ENCODE measurements at regions of chr16 and their contacts with region 1.

Region 1: DNA sequence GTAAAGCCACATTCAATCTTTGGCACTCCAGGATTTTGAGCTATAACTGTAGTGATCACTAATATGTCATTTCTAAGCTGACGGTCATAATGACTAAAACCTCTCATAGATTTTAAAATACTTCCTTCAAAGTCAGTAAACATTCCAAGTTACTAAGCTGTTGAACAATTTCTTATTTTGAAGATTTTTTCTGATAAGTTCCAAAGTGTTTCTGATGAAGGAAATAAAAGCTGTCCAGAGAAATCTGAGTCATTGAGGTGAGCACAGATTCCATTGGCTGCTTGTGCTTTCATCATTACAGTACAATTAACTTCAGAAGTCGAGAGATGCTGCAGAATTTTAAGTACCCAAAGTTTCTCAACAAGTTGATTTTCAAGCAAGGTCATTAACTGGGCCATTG is 23.9 kb downstream of the NLRC5 start:
- DNase-seq: peak; percentile 76
- H3K4me3 ChIP-seq: no peak overlapping the region
- H3K27ac ChIP-seq: peak overlapping the region; percentile 74
- H3K4me1 ChIP-seq: peaks cover 31% of the 10 kb centered on the region
- H3K27me3 ChIP-seq: no peaks in the 10 kb centered on the region

Region 2: GRCh38 chr16:56898847-56899246 is 114.4 kb before region 1 on chr16:
- in situ Hi-C with region 1: no loop called
- DNase-seq: no peak
- H3K4me3 ChIP-seq: no peak overlapping the region
- H3K27ac ChIP-seq: no peak overlapping the region
- H3K4me1 ChIP-seq: no peaks in the 10 kb centered on the region
- H3K27me3 ChIP-seq: no peaks in the 10 kb centered on the region

Region 3: DNA sequence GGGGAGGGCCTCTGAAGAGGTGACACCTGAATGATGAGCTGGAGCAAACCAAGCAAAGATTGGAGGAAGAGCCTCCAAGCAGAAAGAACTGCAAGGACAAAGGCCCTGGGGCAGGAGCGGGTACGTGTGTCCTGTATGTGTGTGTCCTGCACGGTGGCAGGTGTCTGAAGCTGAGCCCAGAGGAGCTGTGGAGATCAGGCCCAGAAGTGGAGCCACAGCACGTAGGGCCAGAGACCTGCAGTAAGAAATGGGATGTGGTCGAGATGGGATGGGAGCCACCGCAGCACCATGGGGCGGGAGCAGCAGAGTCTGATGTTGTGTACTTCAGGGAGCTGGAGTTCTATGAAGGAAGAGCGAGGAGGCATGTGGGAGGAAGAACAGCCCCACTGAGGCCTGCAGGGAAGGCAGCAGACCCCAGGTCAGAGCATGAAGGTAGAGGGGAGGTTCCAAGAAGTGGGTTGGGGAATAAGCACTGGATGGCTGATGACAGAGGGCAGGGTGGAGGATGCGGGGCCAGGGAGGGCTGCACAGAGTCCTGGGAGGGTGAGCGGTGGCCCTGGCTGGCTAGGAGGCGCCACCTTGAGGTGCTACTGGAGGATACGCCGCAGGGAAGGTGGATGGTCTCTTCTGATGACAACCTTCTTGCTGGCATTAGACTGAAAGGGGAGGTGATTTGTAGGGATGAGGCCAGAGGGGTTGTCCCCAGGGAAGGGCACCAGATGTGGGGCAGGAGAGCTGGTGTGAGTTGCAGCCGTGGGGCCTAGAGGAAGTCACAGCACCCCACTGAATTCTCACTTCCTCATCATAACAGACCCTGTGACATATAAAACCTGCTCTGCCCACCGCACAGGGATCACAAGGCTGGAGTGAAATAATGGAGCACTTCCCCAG is 62.1 kb before region 1 on chr16:
- in situ Hi-C with region 1: loop called (anchors 10 kb)
- DNase-seq: peak; percentile 83
- H3K4me3 ChIP-seq: no peak overlapping the region
- H3K27ac ChIP-seq: no peak overlapping the region
- H3K4me1 ChIP-seq: no peaks in the 10 kb centered on the region
- H3K27me3 ChIP-seq: no peaks in the 10 kb centered on the region